ENCODE measurements at regions of chr1 and their contacts with region 1.

Region 1: GRCh38 chr1:29124366-29125236 is 898 bp upstream of the TMEM200B start:
- DNase-seq: peak; percentile 45 to 64 (median 52)
- H3K4me3 ChIP-seq: peak overlapping the region; percentile 52 to 55
- H3K4me3 Mint-ChIP-seq: peak overlapping the region; percentile 60 to 80 (median 74)
- H3K27ac ChIP-seq: peak overlapping the region; percentile 0
- H3K27ac Mint-ChIP-seq: no peak overlapping the region
- H3K4me1 ChIP-seq: peaks cover 25% of the 10 kb centered on the region
- H3K4me1 Mint-ChIP-seq: peaks cover 3 to 21% (median 10%) of the 10 kb centered on the region in 4 donors
- H3K27me3 ChIP-seq: no peaks in the 10 kb centered on the region
- H3K27me3 Mint-ChIP-seq: peaks cover 5 to 19% of the 10 kb centered on the region in 2 donors

Region 2: GRCh38 chr1:28860332-28861073 is 264.1 kb before region 1 on chr1:
- CTCF ChIA-PET with region 1: no interaction called
- POLR2A ChIA-PET with region 1: no interaction called
- intact Hi-C with region 1: no loop called
- DNase-seq: no peak
- H3K4me3 ChIP-seq: no peak overlapping the region
- H3K4me3 Mint-ChIP-seq: no peak overlapping the region
- H3K27ac ChIP-seq: no peak overlapping the region
- H3K27ac Mint-ChIP-seq: no peak overlapping the region
- H3K4me1 ChIP-seq: no peaks in the 10 kb centered on the region
- H3K4me1 Mint-ChIP-seq: no peaks in the 10 kb centered on the region
- H3K27me3 ChIP-seq: no peaks in the 10 kb centered on the region
- H3K27me3 Mint-ChIP-seq: peaks cover 0 to 3% of the 10 kb centered on the region in 2 donors

Region 3: DNA sequence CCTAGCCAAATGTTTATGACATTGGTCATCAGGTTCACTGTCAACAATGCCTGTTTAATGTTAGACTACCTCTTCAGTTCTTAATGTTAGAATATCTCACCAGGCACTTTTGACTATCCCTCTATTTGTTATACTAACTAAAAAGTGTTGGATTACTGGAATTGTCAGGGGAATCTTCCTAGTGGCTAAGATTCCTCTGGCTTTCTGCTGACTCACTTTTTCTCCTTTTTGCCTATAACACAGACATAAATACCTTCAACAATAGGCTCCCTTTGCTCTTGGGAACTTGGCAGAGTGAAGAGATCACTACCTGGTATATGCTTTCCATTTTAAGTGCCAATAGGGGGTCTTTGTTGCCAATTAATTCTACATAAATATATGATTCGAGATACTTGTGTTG is 69.4 kb before region 1 on chr1:
- CTCF ChIA-PET with region 1: no interaction called
- POLR2A ChIA-PET with region 1: no interaction called
- intact Hi-C with region 1: no loop called
- DNase-seq: no peak
- H3K4me3 ChIP-seq: no peak overlapping the region
- H3K4me3 Mint-ChIP-seq: no peak overlapping the region
- H3K27ac ChIP-seq: no peak overlapping the region
- H3K27ac Mint-ChIP-seq: no peak overlapping the region
- H3K4me1 ChIP-seq: no peaks in the 10 kb centered on the region
- H3K4me1 Mint-ChIP-seq: peaks cover 0 to 3% (median under 1%) of the 10 kb centered on the region in 4 donors
- H3K27me3 ChIP-seq: no peaks in the 10 kb centered on the region
- H3K27me3 Mint-ChIP-seq: no peaks in the 10 kb centered on the region

Region 4: DNA sequence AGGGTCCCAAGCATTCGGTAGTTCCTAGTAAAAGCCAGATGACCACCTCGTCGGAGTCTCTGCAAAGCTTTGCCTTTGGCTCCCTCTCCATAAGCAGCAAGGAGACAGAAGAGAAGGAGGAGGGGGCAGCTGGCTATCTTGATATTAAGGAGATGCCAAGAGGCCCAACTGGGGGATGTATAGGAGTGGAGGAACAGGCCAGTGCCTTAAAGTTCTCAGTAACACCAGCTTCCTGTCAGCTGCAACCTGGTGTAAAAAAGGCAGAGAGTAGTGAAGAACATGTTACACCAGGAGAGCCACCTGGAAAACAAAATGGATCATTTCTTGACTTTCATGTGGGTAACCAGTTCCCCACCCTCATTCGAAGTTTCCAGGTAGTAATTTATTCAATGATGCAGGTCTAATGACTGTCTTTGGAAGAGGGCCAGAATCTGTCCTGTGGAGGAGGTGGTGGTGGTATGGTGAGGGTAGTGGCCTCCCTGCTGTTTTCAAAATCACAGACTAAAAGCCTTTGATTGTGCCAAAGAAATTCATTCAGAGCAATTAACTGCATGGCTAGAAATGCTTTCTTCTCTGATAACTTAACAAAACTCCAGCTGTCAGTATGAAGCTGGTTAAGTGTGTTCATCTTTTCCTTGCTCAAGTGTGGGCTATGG is 28.2 kb before region 1 on chr1:
- CTCF ChIA-PET with region 1: no interaction called
- POLR2A ChIA-PET with region 1: no interaction called
- intact Hi-C with region 1: no loop called
- DNase-seq: no peak
- H3K4me3 ChIP-seq: no peak overlapping the region
- H3K4me3 Mint-ChIP-seq: no peak overlapping the region
- H3K27ac ChIP-seq: no peak overlapping the region
- H3K27ac Mint-ChIP-seq: peak overlapping the region in 1 of 7 donors; percentile 20
- H3K4me1 ChIP-seq: no peaks in the 10 kb centered on the region
- H3K4me1 Mint-ChIP-seq: peaks cover 0 to 1% (median 0%) of the 10 kb centered on the region in 4 donors
- H3K27me3 ChIP-seq: no peaks in the 10 kb centered on the region
- H3K27me3 Mint-ChIP-seq: no peaks in the 10 kb centered on the region

Region 5: GRCh38 chr1:29112705-29113412 is 11.7 kb before region 1 on chr1:
- CTCF ChIA-PET with region 1: interaction called, 18 read pairs
- POLR2A ChIA-PET with region 1: interaction called, 3 read pairs
- intact Hi-C with region 1: no loop called
- DNase-seq: no peak
- H3K4me3 ChIP-seq: no peak overlapping the region
- H3K4me3 Mint-ChIP-seq: peak overlapping the region in 1 of 8 donors; percentile 20
- H3K27ac ChIP-seq: no peak overlapping the region
- H3K27ac Mint-ChIP-seq: peak overlapping the region in 1 of 7 donors; percentile 18
- H3K4me1 ChIP-seq: no peaks in the 10 kb centered on the region
- H3K4me1 Mint-ChIP-seq: peaks cover 0 to 2% (median 0%) of the 10 kb centered on the region in 4 donors
- H3K27me3 ChIP-seq: no peaks in the 10 kb centered on the region
- H3K27me3 Mint-ChIP-seq: no peaks in the 10 kb centered on the region

Region 6: DNA sequence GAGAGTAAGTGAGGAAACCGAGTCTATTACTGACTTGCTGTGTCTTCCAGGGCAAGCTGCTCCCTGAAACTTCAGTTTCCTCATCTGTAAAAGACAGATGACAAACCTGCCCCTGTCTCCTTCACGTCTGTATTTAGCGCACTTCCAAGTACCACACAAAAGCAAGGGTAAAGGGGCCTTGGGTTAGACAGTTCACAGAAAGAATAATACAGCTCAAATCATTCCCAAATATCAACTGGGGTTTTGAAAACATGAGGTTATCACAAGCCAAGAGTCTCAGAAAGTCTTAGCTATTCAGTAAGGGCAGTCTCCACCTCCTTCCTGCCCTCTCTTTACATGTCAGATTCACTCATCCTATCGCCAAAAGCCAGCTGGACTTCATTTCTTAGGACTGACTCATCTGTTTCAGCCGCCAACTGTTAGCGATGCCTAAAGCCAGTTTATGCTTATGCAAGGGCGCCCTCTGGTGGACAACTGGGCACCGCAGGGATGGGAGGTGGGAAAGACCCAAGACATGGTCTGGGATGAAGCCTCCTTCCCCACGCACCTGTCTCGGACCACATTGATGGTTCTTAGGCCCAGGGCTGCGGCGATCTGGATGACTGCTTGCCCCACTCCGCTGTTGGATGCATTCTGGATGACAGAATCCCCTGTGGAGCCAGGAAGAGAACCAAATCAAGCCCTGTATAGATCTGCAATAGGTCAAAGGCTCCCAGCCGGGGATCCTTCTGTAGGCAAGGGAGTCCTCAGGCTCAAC is 78.2 kb after region 1 on chr1:
- CTCF ChIA-PET with region 1: interaction called, 20 read pairs
- POLR2A ChIA-PET with region 1: no interaction called
- intact Hi-C with region 1: loop called (anchors 1 kb)
- DNase-seq: peak; percentile 73 to 81 (median 76)
- H3K4me3 ChIP-seq: no peak overlapping the region
- H3K4me3 Mint-ChIP-seq: no peak overlapping the region
- H3K27ac ChIP-seq: no peak overlapping the region
- H3K27ac Mint-ChIP-seq: peak overlapping the region in 2 of 7 donors; percentile 12 to 24
- H3K4me1 ChIP-seq: no peaks in the 10 kb centered on the region
- H3K4me1 Mint-ChIP-seq: peaks cover 0 to 7% (median 2%) of the 10 kb centered on the region in 4 donors
- H3K27me3 ChIP-seq: no peaks in the 10 kb centered on the region
- H3K27me3 Mint-ChIP-seq: no peaks in the 10 kb centered on the region

Region 7: DNA sequence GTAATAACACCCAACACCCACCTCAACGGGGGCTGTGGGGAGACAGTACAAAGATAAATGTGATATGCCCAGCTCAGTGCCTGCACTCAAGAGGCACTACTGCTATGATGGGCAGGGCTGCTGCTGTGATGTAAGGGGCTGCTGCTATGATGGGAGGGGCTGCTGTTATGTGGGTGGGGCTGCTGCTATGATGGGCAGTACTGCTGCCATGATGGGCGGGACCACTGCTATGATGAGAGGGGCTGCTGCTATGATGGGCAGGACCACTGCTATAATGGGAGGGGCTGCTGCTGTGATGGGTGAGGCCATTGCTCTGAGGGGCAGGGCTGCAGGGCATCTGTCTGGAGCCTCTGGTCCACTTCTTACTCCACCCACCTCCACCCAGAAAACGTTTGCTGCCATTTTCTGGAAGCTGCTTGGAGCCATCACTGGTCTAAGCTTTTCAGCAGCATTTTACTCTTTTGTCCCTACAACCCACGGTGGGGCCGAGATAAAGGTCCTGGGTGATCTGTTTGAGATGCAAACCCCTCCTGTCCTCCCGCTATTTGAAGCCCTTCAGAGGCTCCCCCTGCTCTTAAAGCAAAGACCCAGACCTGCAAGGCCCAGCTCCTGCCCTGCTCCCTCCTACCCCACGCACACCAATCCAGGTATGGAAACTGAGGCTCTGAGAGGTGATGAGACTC is 768.6 kb after region 1 on chr1:
- CTCF ChIA-PET with region 1: no interaction called
- POLR2A ChIA-PET with region 1: no interaction called
- intact Hi-C with region 1: no loop called
- DNase-seq: no peak
- H3K4me3 ChIP-seq: no peak overlapping the region
- H3K4me3 Mint-ChIP-seq: no peak overlapping the region
- H3K27ac ChIP-seq: no peak overlapping the region
- H3K27ac Mint-ChIP-seq: no peak overlapping the region
- H3K4me1 ChIP-seq: no peaks in the 10 kb centered on the region
- H3K4me1 Mint-ChIP-seq: no peaks in the 10 kb centered on the region
- H3K27me3 ChIP-seq: no peaks in the 10 kb centered on the region
- H3K27me3 Mint-ChIP-seq: peaks cover 15 to 27% of the 10 kb centered on the region in 2 donors